Endothelial cell of umbilical vein (primary cell): ENCODE measurements at regions of chr11 and their contacts with region 1.

Region 1: DNA sequence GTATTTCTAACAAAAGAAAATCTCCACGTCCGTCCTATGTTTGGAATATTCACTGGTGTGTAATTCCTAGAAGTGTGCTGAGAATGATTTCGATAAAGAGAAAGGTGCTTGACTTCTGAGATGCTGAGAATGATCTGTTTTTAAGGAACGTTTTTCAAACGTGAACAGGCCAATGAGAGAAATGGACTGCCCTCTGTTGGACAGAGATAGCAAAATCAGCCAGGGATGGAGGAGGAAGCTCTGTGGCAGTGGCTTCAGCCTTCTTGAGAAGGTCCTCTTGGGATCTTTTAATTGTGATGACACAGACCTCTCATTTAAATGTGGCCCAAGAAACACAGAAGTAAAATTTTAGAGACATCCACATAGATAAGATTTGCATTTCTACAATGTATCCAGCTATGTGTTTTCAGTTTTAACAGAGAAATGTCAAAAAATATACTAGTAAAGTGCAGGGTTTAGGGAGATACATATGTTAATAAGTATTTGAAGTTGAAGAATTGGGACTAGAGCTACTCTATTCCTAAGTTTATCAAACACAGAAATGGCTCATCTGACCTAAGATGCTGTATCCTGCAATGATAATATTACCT is 84.0 kb upstream of the RCN1 start:
- DNase-seq: peak; percentile 45
- H3K4me3 ChIP-seq: no peak overlapping the region
- H3K27ac ChIP-seq: no peak overlapping the region
- H3K4me1 ChIP-seq: no peaks in the 10 kb centered on the region
- H3K27me3 ChIP-seq: peaks cover 3 to 4% of the 10 kb centered on the region in 2 experiments
- CTCF ChIP-seq: peak; percentile 59 to 66
- POLR2A ChIP-seq: no peak

Region 2: DNA sequence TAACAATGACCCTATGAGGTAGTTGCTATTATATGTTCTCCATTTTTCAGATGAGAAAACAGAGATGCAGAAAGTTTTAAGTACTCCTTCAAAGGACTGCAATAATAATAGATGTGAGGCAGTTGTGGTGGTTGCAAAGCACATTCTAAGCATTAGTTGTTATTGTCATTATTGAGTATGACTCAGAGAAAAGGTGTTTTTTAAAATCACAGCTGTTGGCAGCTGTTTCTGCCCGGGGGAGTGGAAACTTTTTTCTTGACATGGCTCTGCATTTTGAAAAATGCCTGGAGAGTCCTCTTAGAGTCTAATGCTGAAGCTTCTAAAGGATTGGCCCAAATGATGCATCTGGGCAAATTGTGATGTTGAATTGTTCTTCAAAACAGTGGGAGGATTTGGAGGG is 1176.2 kb before region 1 on chr11:
- CTCF ChIA-PET with region 1: no interaction called
- POLR2A ChIA-PET with region 1: no interaction called
- dilution Hi-C with region 1: no loop called
- intact Hi-C with region 1: no loop called
- DNase-seq: no peak
- H3K4me3 ChIP-seq: no peak overlapping the region
- H3K27ac ChIP-seq: no peak overlapping the region
- H3K4me1 ChIP-seq: no peaks in the 10 kb centered on the region
- H3K27me3 ChIP-seq: no peaks in the 10 kb centered on the region
- CTCF ChIP-seq: no peak
- POLR2A ChIP-seq: no peak

Region 3: DNA sequence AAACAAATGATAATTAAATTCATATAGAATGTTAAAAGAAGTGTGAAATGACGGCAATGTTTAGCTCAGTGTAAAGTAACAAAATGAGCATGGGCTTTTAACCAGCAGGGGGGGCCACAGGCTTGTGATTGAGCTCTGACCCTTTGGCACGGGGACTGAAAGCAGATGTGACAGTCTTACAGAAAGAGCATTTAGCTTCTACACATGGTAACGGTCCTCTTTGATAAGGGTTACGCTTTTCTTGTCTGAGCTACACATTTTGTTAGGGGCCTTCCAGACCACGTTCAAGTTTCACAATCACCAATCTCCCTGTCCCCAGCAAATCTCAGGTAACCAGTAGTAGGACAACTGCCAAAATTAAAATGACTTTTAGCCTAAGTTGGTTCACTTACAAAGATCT is 899.8 kb before region 1 on chr11:
- CTCF ChIA-PET with region 1: interaction called, 13 read pairs
- POLR2A ChIA-PET with region 1: no interaction called
- dilution Hi-C with region 1: no loop called
- intact Hi-C with region 1: no loop called
- DNase-seq: peak; percentile 44
- H3K4me3 ChIP-seq: no peak overlapping the region
- H3K27ac ChIP-seq: no peak overlapping the region
- H3K4me1 ChIP-seq: no peaks in the 10 kb centered on the region
- H3K27me3 ChIP-seq: no peaks in the 10 kb centered on the region
- CTCF ChIP-seq: peak; percentile 20 to 53
- POLR2A ChIP-seq: no peak

Region 4: DNA sequence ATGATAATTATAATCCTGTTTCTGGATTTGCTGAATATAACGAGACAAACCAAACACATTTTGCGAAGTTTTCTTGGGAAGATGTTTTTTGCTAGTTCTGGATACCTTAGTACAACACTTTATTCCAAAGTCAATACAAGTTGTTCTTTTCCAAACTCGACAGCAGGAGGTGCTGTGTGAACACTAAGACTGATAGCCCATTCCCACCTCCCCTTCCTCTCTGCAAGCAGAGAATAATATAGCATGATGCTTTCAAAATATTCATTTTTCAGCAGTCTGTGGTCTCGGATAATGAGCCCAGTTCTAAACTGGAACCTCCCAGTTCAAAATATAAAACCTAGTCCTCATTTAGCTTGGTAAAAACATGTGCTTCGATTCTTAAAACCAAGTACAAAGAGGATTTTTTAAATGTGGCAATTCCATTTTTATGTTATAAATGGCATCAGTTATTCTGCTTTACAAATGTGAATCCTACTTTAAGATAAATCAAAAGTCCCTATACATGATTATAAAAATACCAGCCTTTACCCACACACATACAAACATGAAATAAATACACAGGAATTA is 766.5 kb before region 1 on chr11:
- CTCF ChIA-PET with region 1: interaction called, 15 read pairs
- POLR2A ChIA-PET with region 1: no interaction called
- dilution Hi-C with region 1: no loop called
- intact Hi-C with region 1: loop called (anchors 5 kb)
- DNase-seq: peak; percentile 51
- H3K4me3 ChIP-seq: no peak overlapping the region
- H3K27ac ChIP-seq: no peak overlapping the region
- H3K4me1 ChIP-seq: no peaks in the 10 kb centered on the region
- H3K27me3 ChIP-seq: no peaks in the 10 kb centered on the region
- CTCF ChIP-seq: peak; percentile 38 to 51
- POLR2A ChIP-seq: no peak

Region 5: DNA sequence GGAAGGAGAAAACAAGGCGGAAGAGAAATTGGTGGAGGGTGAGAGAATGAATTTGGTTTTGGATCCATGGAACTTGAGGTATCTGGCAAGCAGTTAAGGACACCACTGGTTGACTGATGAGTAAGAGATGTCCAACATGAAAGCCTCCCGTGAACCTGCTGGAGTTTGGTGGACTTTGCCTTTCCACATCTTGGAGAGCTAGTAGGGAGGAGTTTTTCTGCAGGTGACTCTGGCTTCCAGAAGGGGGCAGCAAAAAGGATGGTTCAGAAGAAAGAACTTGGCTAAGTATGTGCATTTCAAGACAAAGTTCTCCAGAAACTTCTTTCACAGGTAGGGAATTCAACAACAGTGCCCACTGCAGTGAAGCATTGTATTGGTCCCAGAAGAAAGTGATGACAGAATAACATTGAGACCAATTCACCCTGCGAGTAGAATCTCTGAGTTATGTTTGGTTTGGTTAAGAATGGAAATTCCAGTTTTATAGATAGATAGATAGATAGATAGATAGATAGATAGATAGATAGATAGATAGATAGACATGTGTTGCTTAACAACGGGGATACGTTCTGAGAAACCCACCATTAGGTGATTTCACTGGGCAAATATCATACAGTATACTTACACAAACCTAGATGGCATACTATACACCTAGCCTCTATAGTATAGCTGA is 665.9 kb before region 1 on chr11:
- CTCF ChIA-PET with region 1: interaction called, 14 read pairs
- POLR2A ChIA-PET with region 1: no interaction called
- dilution Hi-C with region 1: no loop called
- intact Hi-C with region 1: no loop called
- DNase-seq: peak; percentile 43
- H3K4me3 ChIP-seq: no peak overlapping the region
- H3K27ac ChIP-seq: no peak overlapping the region
- H3K4me1 ChIP-seq: no peaks in the 10 kb centered on the region
- H3K27me3 ChIP-seq: peaks cover 3 to 4% of the 10 kb centered on the region in 2 experiments
- CTCF ChIP-seq: peak; percentile 49 to 70
- POLR2A ChIP-seq: no peak

Region 6: GRCh38 chr11:31397239-31397834 is 609.6 kb before region 1 on chr11:
- CTCF ChIA-PET with region 1: interaction called, 9 read pairs
- POLR2A ChIA-PET with region 1: no interaction called
- dilution Hi-C with region 1: no loop called
- intact Hi-C with region 1: loop called (anchors 5 kb)
- DNase-seq: peak; percentile 39
- H3K4me3 ChIP-seq: no peak overlapping the region
- H3K27ac ChIP-seq: no peak overlapping the region
- H3K4me1 ChIP-seq: no peaks in the 10 kb centered on the region
- H3K27me3 ChIP-seq: no peaks in the 10 kb centered on the region
- CTCF ChIP-seq: peak; percentile 37 to 39
- POLR2A ChIP-seq: no peak

Region 7: GRCh38 chr11:31487848-31488247 is 519.0 kb before region 1 on chr11:
- CTCF ChIA-PET with region 1: interaction called, 4 read pairs
- POLR2A ChIA-PET with region 1: no interaction called
- dilution Hi-C with region 1: no loop called
- intact Hi-C with region 1: loop called (anchors 1 kb)
- DNase-seq: peak; percentile 74
- H3K4me3 ChIP-seq: no peak overlapping the region
- H3K27ac ChIP-seq: no peak overlapping the region
- H3K4me1 ChIP-seq: no peaks in the 10 kb centered on the region
- H3K27me3 ChIP-seq: no peaks in the 10 kb centered on the region
- CTCF ChIP-seq: peak; percentile 24 to 28
- POLR2A ChIP-seq: no peak

Region 8: DNA sequence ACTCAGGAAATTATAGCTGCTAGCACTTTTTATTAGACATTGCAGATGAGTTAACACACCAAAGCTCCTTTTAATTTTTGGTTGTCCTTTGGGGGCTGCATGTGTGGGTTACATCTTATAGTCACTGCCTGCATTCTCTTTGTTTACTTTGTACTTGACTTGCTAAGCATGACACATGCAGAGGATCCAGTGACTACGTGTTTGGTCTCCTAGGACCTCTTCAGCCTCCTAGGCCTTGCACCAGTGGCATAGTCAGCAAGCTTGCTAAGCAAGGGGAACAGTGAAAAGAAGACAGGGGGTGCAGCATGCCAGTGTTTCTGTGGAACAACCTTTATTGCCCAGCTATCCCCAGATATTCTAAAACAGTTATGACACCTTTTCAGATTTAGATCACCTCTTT is 303.9 kb before region 1 on chr11:
- CTCF ChIA-PET with region 1: no interaction called
- POLR2A ChIA-PET with region 1: no interaction called
- dilution Hi-C with region 1: no loop called
- intact Hi-C with region 1: no loop called
- DNase-seq: no peak
- H3K4me3 ChIP-seq: no peak overlapping the region
- H3K27ac ChIP-seq: no peak overlapping the region
- H3K4me1 ChIP-seq: no peaks in the 10 kb centered on the region
- H3K27me3 ChIP-seq: no peaks in the 10 kb centered on the region
- CTCF ChIP-seq: no peak
- POLR2A ChIP-seq: no peak

Region 9: DNA sequence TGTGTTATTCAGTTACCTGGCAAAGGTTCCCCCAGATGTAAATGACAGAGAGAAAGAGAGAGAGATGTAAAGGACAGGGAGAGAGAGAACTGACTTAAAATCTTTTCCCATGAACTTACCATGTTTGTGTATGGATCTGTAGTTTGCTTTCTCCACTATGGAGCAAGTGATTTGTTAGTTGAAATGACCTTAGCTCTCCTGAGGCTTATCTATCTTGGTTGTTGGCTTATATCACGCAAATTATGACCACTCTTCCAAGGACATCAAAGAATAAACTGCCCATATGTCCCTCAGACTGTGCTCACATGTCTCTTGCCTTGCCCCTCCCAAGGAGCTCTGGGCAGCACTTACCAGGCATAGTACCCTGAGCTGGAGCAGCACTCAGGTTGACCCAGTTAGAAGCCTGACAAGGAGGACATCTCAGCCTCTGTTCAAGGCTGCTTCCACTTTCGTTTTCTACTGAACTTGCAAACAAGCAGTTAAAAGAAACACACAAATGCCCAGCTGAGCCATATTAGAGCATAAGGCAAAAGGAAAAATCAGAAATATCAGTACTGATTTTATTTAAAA is 11.3 kb before region 1 on chr11:
- CTCF ChIA-PET with region 1: interaction called, 12 read pairs
- POLR2A ChIA-PET with region 1: no interaction called
- dilution Hi-C with region 1: no loop called
- intact Hi-C with region 1: no loop called
- DNase-seq: peak; percentile 4
- H3K4me3 ChIP-seq: no peak overlapping the region
- H3K27ac ChIP-seq: no peak overlapping the region
- H3K4me1 ChIP-seq: no peaks in the 10 kb centered on the region
- H3K27me3 ChIP-seq: peaks cover 0 to 3% of the 10 kb centered on the region in 2 experiments
- CTCF ChIP-seq: no peak
- POLR2A ChIP-seq: no peak